ENCODE measurements at regions of chr17 and their contacts with region 1.

Region 1: DNA sequence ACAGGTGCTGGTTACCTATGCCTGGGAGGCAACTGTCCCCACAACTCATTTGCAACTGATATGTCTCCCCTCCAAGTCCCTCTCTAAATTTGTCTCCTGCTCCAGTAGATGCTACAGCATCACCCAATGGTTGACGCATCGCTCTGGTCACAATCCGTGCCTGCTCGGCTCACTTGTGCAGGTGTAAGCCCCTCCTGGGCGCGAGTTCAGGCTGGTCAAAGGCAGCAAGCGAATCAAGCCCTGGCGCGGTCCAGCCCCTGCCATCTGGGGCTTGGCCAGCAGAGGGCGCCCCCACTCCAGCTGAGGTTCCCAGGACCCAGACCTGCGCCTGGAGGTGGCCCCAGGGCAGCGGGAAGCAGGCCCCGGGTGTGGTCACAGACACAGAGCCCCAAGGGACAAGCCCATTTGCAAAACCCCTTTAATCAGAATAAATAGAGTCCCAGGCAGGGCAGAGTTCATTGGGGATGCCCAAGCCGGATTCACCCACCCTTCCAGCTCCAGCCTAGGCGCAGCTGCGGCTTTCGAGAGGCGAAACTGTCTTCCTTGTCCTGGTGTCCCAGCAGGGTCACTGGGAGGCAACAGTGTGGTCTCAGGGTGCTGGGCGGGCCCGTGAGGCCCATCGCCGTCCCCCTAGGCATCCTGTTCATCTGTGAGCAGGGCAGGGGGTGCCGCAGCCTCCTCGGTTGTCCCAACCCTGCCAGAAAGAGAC is 15.9 kb downstream of the TMC6 start:
- DNase-seq: peak; percentile 68
- H3K4me3 Mint-ChIP-seq: no peak overlapping the region
- H3K27ac Mint-ChIP-seq: peak overlapping the region; percentile 76
- H3K4me1 Mint-ChIP-seq: peaks cover 30% of the 10 kb centered on the region
- H3K27me3 Mint-ChIP-seq: no peaks in the 10 kb centered on the region

Region 2: DNA sequence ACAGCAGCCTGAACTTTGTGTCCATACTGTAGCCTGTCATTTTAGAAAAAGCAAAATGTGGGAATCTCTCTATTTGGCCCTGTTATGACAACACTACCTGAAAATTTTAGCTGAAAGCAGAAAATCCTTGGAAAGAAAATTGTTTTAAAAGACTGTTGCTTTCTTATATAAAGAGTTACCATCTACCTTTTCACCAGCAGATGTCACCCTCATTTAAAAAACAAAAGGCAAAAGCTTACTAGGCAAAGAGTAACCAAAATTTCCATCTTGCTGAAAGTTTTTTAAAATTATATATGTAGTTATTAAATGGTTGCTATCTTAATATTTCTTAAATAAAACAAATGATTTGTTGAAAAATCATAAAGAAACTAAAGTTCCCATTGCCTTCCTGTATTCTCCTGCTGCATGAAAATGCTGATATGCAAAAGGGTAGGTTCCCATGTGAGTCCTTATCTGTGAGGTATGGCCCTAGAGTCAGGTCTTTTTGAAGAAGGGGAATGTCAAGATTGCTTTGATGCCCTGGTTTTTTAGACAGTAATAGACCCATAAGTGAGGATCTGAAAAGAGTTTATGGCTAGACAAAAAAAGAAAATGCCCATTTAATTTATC is 93.2 kb before region 1 on chr17:
- intact Hi-C with region 1: loop called (anchors 5 kb)
- DNase-seq: no peak
- H3K4me3 Mint-ChIP-seq: no peak overlapping the region
- H3K27ac Mint-ChIP-seq: no peak overlapping the region
- H3K4me1 Mint-ChIP-seq: peaks cover 27% of the 10 kb centered on the region
- H3K27me3 Mint-ChIP-seq: no peaks in the 10 kb centered on the region

Region 3: GRCh38 chr17:78128551-78129350 is 16.1 kb after region 1 on chr17 and contains the start of gene TMC6:
- intact Hi-C with region 1: loop called (anchors 1 kb)
- DNase-seq: peak; percentile 56
- H3K4me3 Mint-ChIP-seq: peak within 1 kb of the TSS; percentile 98
- H3K27ac Mint-ChIP-seq: peak within 1 kb of the TSS; percentile 99
- H3K4me1 Mint-ChIP-seq: peaks cover 44% of the 10 kb centered on the region
- H3K27me3 Mint-ChIP-seq: no peaks in the 10 kb centered on the region
- total RNA-seq, gene TMC6: 265 and 268 TPM in 2 replicates

Region 4: GRCh38 chr17:78140169-78140976 is 27.7 kb after region 1 on chr17:
- intact Hi-C with region 1: no loop called
- DNase-seq: peak; percentile 96
- H3K4me3 Mint-ChIP-seq: peak overlapping the region; percentile 28
- H3K27ac Mint-ChIP-seq: peak overlapping the region; percentile 77
- H3K4me1 Mint-ChIP-seq: peaks cover 40% of the 10 kb centered on the region
- H3K27me3 Mint-ChIP-seq: no peaks in the 10 kb centered on the region

Region 5: GRCh38 chr17:78168242-78168902 is 55.7 kb after region 1 on chr17 and contains the start of gene SYNGR2:
- intact Hi-C with region 1: loop called (anchors 2 kb)
- DNase-seq: peak; percentile 88
- H3K4me3 Mint-ChIP-seq: peak within 1 kb of the TSS; percentile 77
- H3K27ac Mint-ChIP-seq: peak within 1 kb of the TSS; percentile 65
- H3K4me1 Mint-ChIP-seq: peaks cover 28% of the 10 kb centered on the region
- H3K27me3 Mint-ChIP-seq: peaks cover 2% of the 10 kb centered on the region
- total RNA-seq, gene SYNGR2: 131 and 133 TPM in 2 replicates